ENCODE measurements at regions of chr1 and their contacts with region 1.

Region 1: GRCh38 chr1:112052840-112053239 is 63.4 kb upstream of the KCND3 start:
- DNase-seq: no peak

Region 2: DNA sequence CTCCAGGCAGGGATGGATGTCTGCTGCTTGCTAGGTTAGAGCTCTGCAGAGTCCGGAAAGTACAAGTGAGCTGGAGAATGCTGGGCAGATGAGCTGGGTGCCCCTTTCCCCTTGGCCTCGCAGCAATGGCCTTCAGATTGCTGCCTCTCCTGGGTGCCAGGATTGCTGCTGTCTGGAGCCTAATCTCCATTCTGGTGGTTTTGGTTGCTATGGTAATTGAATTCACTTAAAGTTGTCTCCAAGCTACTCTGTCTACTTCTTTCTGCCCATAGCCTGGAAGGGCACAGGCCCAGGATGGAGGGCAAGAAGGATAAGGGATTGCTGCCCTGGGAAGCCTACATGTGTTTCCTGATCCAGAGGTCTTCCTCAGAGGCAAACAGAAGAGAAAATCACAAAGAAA is 48.8 kb before region 1 on chr1:
- intact Hi-C with region 1: loop called in 1 of 2 experiments (anchors 1 kb)
- DNase-seq: no peak

Region 3: GRCh38 chr1:112021263-112021975 is 31.4 kb before region 1 on chr1:
- intact Hi-C with region 1: loop called in 1 of 2 experiments (anchors 1 kb)
- DNase-seq: no peak

Region 4: DNA sequence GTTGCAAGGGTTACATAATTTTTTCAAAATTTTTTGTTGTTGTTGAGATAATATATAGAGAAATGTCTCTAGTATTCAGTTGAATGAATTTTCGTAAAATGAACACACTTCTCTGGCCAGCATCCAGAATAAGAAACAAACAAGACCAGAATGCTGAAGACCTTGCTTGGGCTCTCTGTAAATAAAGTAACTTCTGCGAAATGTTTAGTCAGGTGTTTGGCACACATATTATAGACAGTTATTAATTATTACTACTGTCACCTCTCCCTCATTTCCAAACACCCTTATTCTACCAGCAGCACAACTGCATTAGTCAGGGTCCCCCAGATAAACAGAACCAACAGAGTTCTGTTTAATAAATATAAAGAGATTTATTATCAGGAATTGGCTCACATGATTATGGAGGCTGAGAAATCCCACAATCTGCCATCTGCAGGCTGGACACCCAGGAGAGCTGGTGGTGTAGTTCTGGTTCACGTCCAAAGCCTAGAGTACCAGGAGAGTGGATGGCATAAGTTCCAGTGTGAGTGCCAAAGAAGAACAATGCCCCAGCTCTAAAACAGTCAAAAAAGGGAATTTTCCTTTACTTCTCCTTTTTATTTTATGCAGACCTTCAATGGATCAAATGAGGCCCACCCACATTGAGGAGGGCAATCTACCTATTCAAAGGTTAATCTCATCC is 19.3 kb before region 1 on chr1:
- intact Hi-C with region 1: no loop called
- DNase-seq: no peak

Region 5: DNA sequence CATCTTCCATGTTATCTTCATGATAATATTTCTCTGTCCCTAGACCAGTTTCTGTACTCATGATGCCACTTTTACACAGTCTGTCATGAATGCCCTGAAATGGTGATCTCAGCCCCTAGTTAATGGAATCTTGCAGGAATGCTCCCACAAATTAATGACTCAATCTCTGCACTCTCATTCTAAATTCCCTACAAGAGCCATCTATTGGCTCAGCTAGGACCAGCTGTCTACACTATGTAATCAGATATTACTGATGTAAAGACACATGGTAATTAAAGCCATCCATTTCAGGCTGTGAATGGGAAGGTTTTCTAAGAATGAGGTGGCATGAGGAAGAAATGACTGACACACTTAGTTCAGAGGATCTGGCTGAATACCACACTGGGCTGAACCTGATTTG is 135.8 kb after region 1 on chr1:
- intact Hi-C with region 1: no loop called
- DNase-seq: no peak

Measured in posterior vena cava (tissue), 2 donors.